ENCODE measurements at regions of chr10 and their contacts with region 1.

Region 1: GRCh38 chr10:132446661-132447194 is 49.7 kb downstream of the PWWP2B start:
- DNase-seq: peak; percentile 90
- ATAC-seq: peak; percentile 76
- H3K4me3 Mint-ChIP-seq: peak overlapping the region; percentile 78
- H3K27ac Mint-ChIP-seq: peak overlapping the region; percentile 99
- H3K4me1 Mint-ChIP-seq: peaks cover 35% of the 10 kb centered on the region
- H3K27me3 Mint-ChIP-seq: no peaks in the 10 kb centered on the region

Region 2: DNA sequence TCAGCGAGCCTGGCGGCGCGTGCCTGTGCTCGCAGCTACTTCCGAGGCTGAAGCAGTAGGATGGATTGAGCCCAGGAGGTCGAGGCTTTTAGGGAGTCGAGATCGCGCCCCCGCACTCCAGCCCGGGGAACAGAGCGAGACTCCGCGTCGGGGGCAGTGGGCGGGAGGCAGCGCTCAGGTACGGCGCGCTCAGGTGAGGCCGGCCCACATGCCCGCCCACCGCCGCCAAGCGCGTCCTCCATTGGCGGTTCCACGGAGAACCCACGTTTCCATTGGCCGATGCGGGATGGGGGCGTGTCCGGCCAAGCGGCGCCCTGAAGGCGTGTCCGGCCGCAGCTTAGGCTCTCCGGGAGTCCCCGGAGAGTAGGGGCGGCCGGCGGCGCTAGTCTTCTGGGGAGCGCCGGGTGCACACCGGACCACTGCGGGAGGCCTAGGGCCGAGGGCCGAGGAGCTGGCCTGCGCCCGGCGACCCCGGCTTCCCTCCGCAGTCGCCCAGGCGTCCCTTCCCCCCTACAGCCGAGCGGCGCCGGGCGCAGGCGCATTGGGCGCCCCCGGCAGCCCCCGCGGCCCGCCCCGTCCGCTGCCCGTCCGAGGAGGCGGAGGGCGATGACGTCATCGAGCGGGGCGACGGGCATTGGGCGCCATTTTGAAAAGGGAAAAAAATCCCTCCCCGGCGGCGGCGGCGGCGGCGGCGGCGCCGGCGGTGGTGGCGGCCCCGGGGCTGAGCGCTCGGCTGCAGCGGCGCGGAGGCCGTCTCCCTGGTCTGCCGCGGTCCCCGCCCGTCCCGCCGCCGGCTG is 546.2 kb before region 1 on chr10 and contains the start of gene PPP2R2D:
- CTCF ChIA-PET with region 1: no interaction called
- POLR2A ChIA-PET with region 1: no interaction called
- intact Hi-C with region 1: loop called in 1 of 2 experiments (anchors 2 kb)
- DNase-seq: peak; percentile 97
- ATAC-seq: peak; percentile 83
- H3K4me3 Mint-ChIP-seq: peak within 1 kb of the TSS; percentile 93
- H3K27ac Mint-ChIP-seq: peak within 1 kb of the TSS; percentile 92
- H3K4me1 Mint-ChIP-seq: peaks cover 53% of the 10 kb centered on the region
- H3K27me3 Mint-ChIP-seq: peaks cover 7% of the 10 kb centered on the region
- total RNA-seq, gene PPP2R2D: 30.0 to 39.3 TPM

Region 3: DNA sequence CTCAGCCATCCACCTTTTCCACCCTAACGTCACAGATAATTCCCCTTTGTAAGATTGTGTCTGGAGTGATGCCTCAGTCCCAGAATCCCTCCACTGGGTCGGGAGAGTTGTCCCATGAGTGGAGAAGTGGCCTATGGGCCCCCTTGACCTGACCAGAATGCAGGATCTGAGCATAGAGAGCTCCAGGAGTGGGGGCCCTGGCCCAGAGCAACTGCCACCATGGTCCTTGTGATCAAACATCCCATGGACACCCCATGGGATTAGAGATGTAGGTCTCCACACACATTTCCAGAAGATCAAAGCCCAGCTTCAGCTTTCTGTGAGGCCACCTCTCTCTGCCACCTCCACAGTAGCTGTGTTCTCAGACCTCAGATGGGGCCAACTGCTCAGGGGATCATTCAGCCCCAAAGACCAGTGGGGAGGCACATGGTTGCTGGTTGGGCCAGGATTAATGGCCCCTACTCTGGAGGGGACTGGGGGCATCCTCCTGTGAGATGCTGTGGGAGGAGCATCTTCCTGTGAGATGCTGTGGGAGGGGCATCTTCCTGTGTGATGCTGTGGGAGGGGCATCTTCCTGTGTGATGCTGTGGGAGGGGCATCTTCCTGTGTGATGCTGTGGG is 288.5 kb before region 1 on chr10:
- CTCF ChIA-PET with region 1: no interaction called
- POLR2A ChIA-PET with region 1: no interaction called
- intact Hi-C with region 1: loop called in 1 of 2 experiments (anchors 2 kb)
- DNase-seq: peak; percentile 57
- ATAC-seq: peak; percentile 56
- H3K4me3 Mint-ChIP-seq: no peak overlapping the region
- H3K27ac Mint-ChIP-seq: peak overlapping the region; percentile 82
- H3K4me1 Mint-ChIP-seq: peaks cover 22% of the 10 kb centered on the region
- H3K27me3 Mint-ChIP-seq: no peaks in the 10 kb centered on the region

Region 4: DNA sequence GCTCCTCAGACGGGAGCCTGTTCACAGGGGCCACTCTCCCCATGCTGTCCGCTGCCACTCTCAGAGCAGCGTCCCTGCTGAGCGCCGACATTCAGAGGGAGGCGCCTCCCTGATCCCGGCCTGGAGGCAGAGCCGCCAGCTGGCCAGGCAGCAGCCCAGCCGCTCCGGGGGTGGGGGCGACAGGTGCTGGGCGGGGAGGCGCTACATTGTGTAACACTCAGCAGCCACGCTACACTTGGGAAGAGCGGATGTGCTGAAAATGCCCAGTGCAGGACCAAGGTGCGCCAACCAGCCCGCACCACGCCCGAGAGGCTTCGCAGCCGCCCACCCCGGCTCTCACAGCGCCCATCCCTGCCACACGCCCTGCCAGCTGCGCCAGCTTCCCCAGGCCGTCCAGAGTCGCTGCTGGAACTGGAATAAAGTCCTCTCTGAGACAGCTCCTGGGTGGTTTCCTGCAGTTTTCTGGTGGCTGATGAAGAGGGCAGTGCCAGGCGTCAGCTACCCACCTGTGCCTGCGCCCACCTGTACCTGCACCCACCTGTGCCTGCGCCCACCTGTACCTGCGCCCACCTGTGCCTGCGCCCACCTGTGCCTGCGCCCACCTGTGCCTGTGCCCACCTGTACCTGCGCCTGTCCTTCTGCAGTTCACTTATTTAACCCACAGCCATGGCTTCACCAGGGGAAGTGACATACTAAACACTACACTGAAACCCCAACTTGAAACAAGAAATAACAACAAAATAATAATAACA is 164.6 kb before region 1 on chr10:
- CTCF ChIA-PET with region 1: no interaction called
- POLR2A ChIA-PET with region 1: no interaction called
- intact Hi-C with region 1: no loop called
- DNase-seq: no peak
- ATAC-seq: no peak
- H3K4me3 Mint-ChIP-seq: no peak overlapping the region
- H3K27ac Mint-ChIP-seq: no peak overlapping the region
- H3K4me1 Mint-ChIP-seq: no peaks in the 10 kb centered on the region
- H3K27me3 Mint-ChIP-seq: no peaks in the 10 kb centered on the region

Region 5: GRCh38 chr10:132387764-132388210 is 58.9 kb before region 1 on chr10:
- CTCF ChIA-PET with region 1: interaction called, 6 read pairs
- POLR2A ChIA-PET with region 1: no interaction called
- intact Hi-C with region 1: loop called in 1 of 2 experiments (anchors 1 kb)
- DNase-seq: peak; percentile 88
- ATAC-seq: peak; percentile 57
- H3K4me3 Mint-ChIP-seq: peak overlapping the region; percentile 62
- H3K27ac Mint-ChIP-seq: peak overlapping the region; percentile 71
- H3K4me1 Mint-ChIP-seq: peaks cover 3% of the 10 kb centered on the region
- H3K27me3 Mint-ChIP-seq: no peaks in the 10 kb centered on the region

Region 6: DNA sequence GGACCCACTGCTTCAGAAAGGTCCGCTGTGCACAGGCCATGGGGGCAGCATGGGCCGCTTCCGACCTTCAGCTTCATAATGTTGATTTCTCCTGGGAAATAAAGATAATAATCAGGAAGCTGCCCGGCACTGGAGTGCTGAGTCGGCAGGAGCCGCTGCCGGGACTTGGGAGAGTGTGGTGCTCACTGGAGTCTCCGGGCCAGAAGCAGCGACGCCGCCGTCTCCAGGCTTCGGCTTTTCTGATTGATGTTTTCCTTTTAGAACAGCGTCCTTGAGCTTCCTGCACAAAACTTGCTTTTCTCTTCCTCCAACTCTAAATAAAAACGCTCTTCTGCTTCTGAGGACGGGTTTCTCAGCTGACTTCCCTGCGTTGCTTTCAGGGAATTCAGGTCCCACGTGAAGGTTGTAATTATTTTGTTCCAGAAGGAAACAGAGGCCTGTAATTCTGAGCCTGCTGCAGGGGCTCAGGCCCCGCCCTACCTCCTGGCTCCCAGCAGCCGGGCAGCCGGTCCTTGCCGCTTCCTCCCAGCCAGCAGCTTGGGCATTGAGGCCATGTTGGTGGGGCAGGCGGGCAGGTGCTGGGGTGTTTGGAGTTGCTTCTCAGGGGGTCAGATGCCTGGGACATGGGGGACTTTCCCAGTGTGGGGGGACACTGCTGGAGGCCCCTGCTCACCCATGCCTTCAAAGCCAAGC is 35.0 kb before region 1 on chr10:
- CTCF ChIA-PET with region 1: interaction called, 3 read pairs
- POLR2A ChIA-PET with region 1: no interaction called
- intact Hi-C with region 1: loop called in 1 of 2 experiments (anchors 5 kb)
- DNase-seq: no peak
- ATAC-seq: no peak
- H3K4me3 Mint-ChIP-seq: no peak overlapping the region
- H3K27ac Mint-ChIP-seq: no peak overlapping the region
- H3K4me1 Mint-ChIP-seq: peaks cover 6% of the 10 kb centered on the region
- H3K27me3 Mint-ChIP-seq: no peaks in the 10 kb centered on the region

Region 7: DNA sequence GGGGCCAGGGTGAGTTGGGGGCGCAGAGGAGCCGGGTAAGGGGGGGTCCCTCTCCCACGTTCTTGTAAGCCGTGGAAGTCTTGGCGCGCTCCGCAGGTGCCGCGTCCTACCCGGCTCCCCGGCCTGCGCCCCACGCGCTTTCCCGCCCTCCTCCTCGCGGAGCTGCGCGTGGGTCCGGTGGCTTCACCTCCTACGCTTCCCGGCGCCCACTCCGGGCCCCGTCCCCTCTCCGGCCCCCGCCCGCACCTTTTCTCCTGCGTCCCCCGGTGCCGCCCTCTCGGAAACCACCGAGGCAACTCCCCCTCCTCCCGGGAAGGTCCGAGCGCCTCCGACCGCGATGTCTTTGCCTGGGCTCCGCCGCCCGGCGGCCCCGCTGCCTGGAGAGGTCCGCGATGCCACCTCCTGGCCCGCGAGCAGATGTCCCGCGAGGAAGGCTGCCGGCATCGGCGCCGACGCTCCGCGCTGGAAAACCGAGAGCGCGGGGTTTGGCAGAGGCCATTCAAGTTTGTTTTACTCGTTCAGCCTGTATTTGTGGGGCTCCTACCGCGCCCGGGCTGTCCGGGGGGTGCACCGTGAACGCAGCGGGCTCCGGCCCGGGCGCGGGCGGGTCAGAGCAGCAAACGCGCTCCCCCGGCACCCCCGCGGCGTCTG is 341.6 kb after region 1 on chr10:
- CTCF ChIA-PET with region 1: no interaction called
- POLR2A ChIA-PET with region 1: no interaction called
- intact Hi-C with region 1: no loop called
- DNase-seq: peak; percentile 26
- ATAC-seq: no peak
- H3K4me3 Mint-ChIP-seq: no peak overlapping the region
- H3K27ac Mint-ChIP-seq: no peak overlapping the region
- H3K4me1 Mint-ChIP-seq: no peaks in the 10 kb centered on the region
- H3K27me3 Mint-ChIP-seq: peaks cover 17% of the 10 kb centered on the region

Measured in activated CD4-positive, alpha-beta T cell treated with anti-CD3 and anti-CD28 coated beads for 36 hours (primary cell).